Ascending aorta (tissue), 2 donors: ENCODE measurements at regions of chr4 and their contacts with region 1.

Region 1: GRCh38 chr4:15451866-15452765 is 17.6 kb upstream of the CC2D2A start:
- DNase-seq: peak in 1 of 2 donors; percentile 77
- H3K4me3 ChIP-seq: no peak overlapping the region
- H3K27ac ChIP-seq: peak overlapping the region; percentile 74 to 78
- H3K4me1 ChIP-seq: peaks cover 17 to 58% of the 10 kb centered on the region in 2 donors
- H3K27me3 ChIP-seq: no peaks in the 10 kb centered on the region
- CTCF ChIP-seq: no peak

Region 2: GRCh38 chr4:15434086-15434485 is 18.0 kb before region 1 on chr4:
- intact Hi-C with region 1: loop called (anchors 1 kb)
- DNase-seq: no peak
- H3K4me3 ChIP-seq: no peak overlapping the region
- H3K27ac ChIP-seq: peak overlapping the region; percentile 75 to 85
- H3K4me1 ChIP-seq: peaks cover 5 to 29% of the 10 kb centered on the region in 2 donors
- H3K27me3 ChIP-seq: no peaks in the 10 kb centered on the region
- CTCF ChIP-seq: no peak